Naive thymus-derived CD4-positive, alpha-beta T cell (primary cell): ENCODE measurements at regions of chr1 and their contacts with region 1.

Region 1: GRCh38 chr1:180502360-180503273 is at the start of gene ACBD6:
- DNase-seq: peak; percentile 80 to 92 (median 89)
- ATAC-seq: peak; percentile 95
- H3K4me3 ChIP-seq: peak within 1 kb of the TSS; percentile 85
- H3K4me3 Mint-ChIP-seq: peak within 1 kb of the TSS; percentile 89 to 100 (median 97)
- H3K27ac ChIP-seq: peak within 1 kb of the TSS; percentile 79
- H3K27ac Mint-ChIP-seq: peak within 1 kb of the TSS; percentile 91 to 99 (median 98)
- H3K4me1 ChIP-seq: peaks cover 10 to 18% of the 10 kb centered on the region in 2 donors
- H3K4me1 Mint-ChIP-seq: peaks cover 17 to 55% (median 38%) of the 10 kb centered on the region in 7 donors
- H3K27me3 ChIP-seq: no peaks in the 10 kb centered on the region
- H3K27me3 Mint-ChIP-seq: peaks cover 0 to 5% (median 0%) of the 10 kb centered on the region in 5 donors
- total RNA-seq, gene ACBD6: 44.2 to 75.7 (median 47.3) TPM

Region 2: GRCh38 chr1:180462102-180462501 is 40.5 kb before region 1 on chr1:
- CTCF ChIA-PET with region 1: no interaction called
- POLR2A ChIA-PET with region 1: no interaction called
- intact Hi-C with region 1: no loop called
- DNase-seq: no peak
- ATAC-seq: no peak
- H3K4me3 ChIP-seq: no peak overlapping the region
- H3K4me3 Mint-ChIP-seq: no peak overlapping the region
- H3K27ac ChIP-seq: no peak overlapping the region
- H3K27ac Mint-ChIP-seq: no peak overlapping the region
- H3K4me1 ChIP-seq: no peaks in the 10 kb centered on the region
- H3K4me1 Mint-ChIP-seq: peaks cover 5 to 48% (median 38%) of the 10 kb centered on the region in 7 donors
- H3K27me3 ChIP-seq: no peaks in the 10 kb centered on the region
- H3K27me3 Mint-ChIP-seq: no peaks in the 10 kb centered on the region

Region 3: GRCh38 chr1:180515864-180516388 is 13.3 kb after region 1 on chr1:
- CTCF ChIA-PET with region 1: interaction called, 20 read pairs
- POLR2A ChIA-PET with region 1: interaction called, 3 read pairs
- intact Hi-C with region 1: no loop called
- DNase-seq: peak in 8 of 9 donors; percentile 33 to 65 (median 53)
- ATAC-seq: peak; percentile 94
- H3K4me3 ChIP-seq: no peak overlapping the region
- H3K4me3 Mint-ChIP-seq: no peak overlapping the region
- H3K27ac ChIP-seq: no peak overlapping the region
- H3K27ac Mint-ChIP-seq: no peak overlapping the region
- H3K4me1 ChIP-seq: no peaks in the 10 kb centered on the region
- H3K4me1 Mint-ChIP-seq: peaks cover 0 to 3% (median 0%) of the 10 kb centered on the region in 7 donors
- H3K27me3 ChIP-seq: no peaks in the 10 kb centered on the region
- H3K27me3 Mint-ChIP-seq: peaks cover 0 to 13% (median 10%) of the 10 kb centered on the region in 5 donors

Region 4: GRCh38 chr1:180586671-180587155 is 84.1 kb after region 1 on chr1:
- CTCF ChIA-PET with region 1: no interaction called
- POLR2A ChIA-PET with region 1: no interaction called
- intact Hi-C with region 1: no loop called
- DNase-seq: no peak
- ATAC-seq: no peak
- H3K4me3 ChIP-seq: no peak overlapping the region
- H3K4me3 Mint-ChIP-seq: no peak overlapping the region
- H3K27ac ChIP-seq: no peak overlapping the region
- H3K27ac Mint-ChIP-seq: peak overlapping the region in 1 of 9 donors; percentile 90
- H3K4me1 ChIP-seq: no peaks in the 10 kb centered on the region
- H3K4me1 Mint-ChIP-seq: peaks cover 0 to 27% (median 0%) of the 10 kb centered on the region in 7 donors
- H3K27me3 ChIP-seq: no peaks in the 10 kb centered on the region
- H3K27me3 Mint-ChIP-seq: peaks cover 0 to 28% (median 5%) of the 10 kb centered on the region in 5 donors

Region 5: DNA sequence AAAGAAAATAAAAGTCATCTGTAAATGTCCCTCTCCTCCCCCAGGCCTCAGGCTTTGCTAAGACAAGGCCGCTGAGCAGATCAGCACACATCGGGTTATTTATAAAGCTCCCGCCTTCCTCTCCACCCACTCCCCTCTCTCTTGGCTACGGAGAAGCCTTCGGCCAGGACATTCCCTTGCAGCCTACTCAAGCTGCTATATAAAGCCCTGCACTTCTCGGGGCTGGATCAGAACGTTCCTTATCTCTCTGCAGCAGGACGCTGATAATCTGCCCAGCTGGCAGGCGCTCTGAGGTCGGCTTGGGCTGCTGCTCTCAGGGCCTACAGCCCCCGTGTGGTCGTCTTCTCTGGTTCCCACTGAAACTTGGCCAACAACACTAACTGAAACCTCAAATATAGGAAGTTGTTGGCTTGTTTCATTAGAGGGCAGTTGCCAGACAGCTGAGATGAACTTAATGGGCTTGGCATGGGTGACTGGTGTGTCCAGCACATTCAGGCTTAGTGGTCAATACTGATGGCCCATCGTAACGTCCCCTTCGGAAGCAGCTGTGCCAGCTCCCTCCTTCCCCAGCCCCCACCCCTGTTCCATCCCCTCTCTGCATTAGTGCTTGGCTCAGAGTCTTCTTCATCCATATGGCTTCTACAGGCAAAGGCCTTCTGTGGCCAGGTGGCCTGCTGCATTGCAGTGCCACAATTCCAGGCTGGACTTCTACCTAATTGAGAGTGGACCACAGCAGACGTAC is 650.4 kb after region 1 on chr1:
- CTCF ChIA-PET with region 1: no interaction called
- POLR2A ChIA-PET with region 1: no interaction called
- intact Hi-C with region 1: loop called (anchors 5 kb)
- DNase-seq: no peak
- ATAC-seq: peak; percentile 58
- H3K4me3 ChIP-seq: no peak overlapping the region
- H3K4me3 Mint-ChIP-seq: no peak overlapping the region
- H3K27ac ChIP-seq: no peak overlapping the region
- H3K27ac Mint-ChIP-seq: peak overlapping the region in 1 of 9 donors; percentile 44
- H3K4me1 ChIP-seq: peaks cover 36 to 49% of the 10 kb centered on the region in 2 donors
- H3K4me1 Mint-ChIP-seq: peaks cover 37 to 75% (median 63%) of the 10 kb centered on the region in 7 donors
- H3K27me3 ChIP-seq: no peaks in the 10 kb centered on the region
- H3K27me3 Mint-ChIP-seq: peaks cover 0 to 27% (median 0%) of the 10 kb centered on the region in 5 donors